ENCODE measurements at regions of chr14 and their contacts with region 1.

Region 1: DNA sequence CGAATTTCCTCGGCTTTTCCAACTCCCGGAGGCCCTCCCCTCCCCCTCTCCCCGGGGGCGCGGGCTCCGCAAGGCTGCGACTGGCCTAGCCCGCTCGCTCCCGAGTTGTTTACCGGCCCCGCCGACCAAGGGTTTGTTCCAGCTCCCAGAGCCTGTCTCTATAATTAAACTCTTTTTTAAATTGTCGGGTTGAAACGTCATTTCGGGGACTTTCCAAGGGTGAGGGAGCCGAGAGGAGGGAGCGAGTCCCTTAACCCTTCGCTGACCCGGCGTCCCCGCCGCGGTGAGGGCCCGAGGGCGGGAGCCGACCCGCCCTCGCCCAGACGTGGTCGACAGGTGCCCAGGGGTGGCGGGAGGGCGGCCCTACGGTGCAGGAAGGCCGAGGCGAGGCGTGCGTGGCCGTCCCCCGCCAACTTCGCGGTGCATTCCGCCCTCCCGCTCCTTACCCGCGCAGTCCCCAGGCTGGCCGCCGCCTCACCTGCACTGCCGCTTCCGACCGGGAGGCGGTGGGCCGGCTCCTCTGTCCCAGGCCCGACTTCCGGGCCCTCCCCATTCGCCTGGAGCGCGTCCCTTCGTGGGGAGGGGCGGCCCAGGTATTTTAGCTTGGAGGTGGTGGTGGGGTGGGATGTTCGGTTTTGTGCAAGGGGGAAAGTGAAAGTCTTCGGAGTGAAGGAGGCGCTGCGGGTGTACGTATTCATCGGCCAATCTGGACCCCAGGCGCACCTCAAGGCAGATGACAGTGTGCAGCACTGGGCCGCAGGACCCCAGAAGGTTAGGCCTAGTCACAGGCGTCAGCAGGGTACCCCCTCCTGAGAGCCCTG is 2.9 kb upstream of the ZFP36L1 start:
- H3K4me3 Mint-ChIP-seq: peak overlapping the region; percentile 99
- H3K27ac Mint-ChIP-seq: peak overlapping the region; percentile 100
- H3K4me1 Mint-ChIP-seq: peaks cover 30% of the 10 kb centered on the region
- H3K27me3 Mint-ChIP-seq: no peaks in the 10 kb centered on the region

Region 2: GRCh38 chr14:68401855-68402254 is 394.0 kb before region 1 on chr14:
- intact Hi-C with region 1: loop called (anchors 5 kb)
- H3K4me3 Mint-ChIP-seq: no peak overlapping the region
- H3K27ac Mint-ChIP-seq: no peak overlapping the region
- H3K4me1 Mint-ChIP-seq: peaks cover 37% of the 10 kb centered on the region
- H3K27me3 Mint-ChIP-seq: no peaks in the 10 kb centered on the region

Region 3: DNA sequence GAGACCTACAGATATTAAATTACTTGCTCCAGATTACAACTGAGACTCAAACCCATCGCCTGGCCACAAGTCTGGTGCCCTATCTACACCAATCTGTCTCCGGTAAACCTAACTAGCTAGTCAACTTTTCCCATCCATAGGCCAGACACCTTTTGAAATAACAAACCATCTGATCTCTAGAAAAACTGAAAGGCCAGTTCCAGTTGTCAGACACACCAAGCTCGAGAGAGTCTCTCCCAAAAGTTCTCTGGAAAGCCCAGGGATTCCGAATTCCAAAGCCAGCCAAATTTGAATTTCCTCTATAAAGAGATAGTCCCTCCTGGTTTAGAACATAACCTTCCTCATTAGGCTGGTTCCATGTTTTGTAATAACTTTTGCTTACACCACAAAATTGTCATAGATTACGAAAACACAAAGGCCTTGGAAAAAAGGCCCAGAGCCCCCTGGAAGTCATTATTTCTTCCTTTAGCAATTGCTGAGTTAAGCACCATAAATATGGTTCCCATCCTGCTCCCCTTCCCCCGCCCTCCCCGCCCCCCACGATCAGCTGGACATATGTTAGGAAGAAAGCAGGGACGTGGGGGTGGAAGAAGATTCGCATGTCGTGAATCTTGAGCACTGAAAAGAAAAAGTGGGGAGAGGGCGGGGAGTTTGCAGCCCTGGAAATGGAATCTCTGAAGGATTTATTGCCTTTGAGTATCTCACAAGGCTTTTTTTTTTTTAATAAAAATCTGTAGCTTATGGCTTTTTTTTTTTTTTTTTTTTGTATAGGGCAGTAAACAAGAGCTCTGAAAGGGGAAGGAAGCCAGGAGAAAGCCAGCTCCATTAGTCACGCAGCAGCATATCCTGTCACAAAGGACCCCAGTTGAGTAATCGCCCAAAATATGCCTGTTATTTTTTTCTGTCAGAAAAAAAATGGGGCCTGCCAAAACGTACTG is 113.4 kb before region 1 on chr14:
- intact Hi-C with region 1: loop called (anchors 2 kb)
- H3K4me3 Mint-ChIP-seq: peak overlapping the region; percentile 49
- H3K27ac Mint-ChIP-seq: peak overlapping the region; percentile 99
- H3K4me1 Mint-ChIP-seq: peaks cover 91% of the 10 kb centered on the region
- H3K27me3 Mint-ChIP-seq: no peaks in the 10 kb centered on the region

Region 4: DNA sequence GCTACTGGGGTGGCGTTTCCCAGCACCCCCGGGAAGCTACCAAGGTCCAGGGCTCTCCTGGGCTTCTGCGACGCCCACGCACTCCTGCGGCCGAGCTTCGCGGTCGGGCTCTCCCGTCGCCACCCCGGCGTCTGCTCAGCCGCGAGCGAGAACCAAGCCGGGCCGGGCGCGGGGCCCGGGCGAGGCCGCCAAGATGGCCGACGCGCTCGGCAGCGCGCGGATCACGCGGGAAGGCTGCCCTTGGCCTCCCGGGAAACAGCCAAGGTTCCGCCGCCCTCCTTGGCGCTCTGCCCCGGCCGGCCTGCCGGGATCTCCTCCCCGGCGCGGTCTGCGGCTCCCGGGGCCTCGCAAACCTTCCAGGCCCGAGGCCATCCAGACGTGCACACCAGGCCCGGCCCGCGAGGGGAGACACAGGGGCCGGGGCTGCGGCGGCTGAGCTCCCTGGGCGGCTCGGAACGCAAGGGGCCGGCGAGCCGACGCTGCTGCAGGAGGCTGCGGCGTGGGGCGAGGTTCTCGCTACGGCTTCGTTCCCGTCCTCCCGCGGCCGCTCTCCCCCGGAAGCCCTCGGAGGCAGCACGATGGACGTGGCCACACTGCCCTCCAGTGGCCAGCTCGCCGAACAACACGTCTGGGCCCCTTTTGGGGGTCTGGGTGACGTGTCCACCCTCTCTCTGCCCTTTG is 20.6 kb after region 1 on chr14:
- intact Hi-C with region 1: loop called (anchors 1 kb)
- H3K4me3 Mint-ChIP-seq: peak overlapping the region; percentile 71
- H3K27ac Mint-ChIP-seq: peak overlapping the region; percentile 95
- H3K4me1 Mint-ChIP-seq: peaks cover 49% of the 10 kb centered on the region
- H3K27me3 Mint-ChIP-seq: no peaks in the 10 kb centered on the region